Lower leg skin (tissue), 4 donors: ENCODE measurements at regions of chr5 and their contacts with region 1.

Region 1: DNA sequence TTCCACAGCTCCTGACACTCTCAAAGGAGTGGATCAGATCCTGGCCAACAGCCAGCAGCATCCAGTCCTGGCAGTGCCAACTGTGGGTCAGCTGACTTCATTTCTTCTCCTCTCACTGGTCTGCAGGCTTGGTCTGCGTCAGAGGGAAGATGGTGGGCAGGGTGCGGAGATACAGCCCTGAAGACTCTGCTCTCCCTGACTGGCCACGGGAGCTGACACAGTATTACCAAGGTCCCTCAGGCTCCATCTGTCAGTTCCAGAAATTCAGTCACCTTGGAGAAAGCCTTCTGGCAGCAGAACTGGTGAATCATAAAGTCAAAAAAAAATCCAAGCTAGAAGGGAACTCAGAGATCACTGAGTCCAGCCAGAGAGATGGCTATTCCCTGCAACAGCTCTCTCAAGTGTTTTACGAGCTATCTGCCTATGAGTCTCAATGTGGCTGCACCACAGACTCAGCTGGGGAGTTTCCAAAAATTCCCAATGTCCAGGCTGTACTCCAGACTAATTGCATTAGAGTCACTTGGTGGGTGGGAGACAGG is 28.0 kb downstream of the C1QTNF2 start:
- DNase-seq: no peak
- H3K4me3 ChIP-seq: no peak overlapping the region
- CTCF ChIP-seq: no peak
- POLR2A ChIP-seq: no peak

Region 2: DNA sequence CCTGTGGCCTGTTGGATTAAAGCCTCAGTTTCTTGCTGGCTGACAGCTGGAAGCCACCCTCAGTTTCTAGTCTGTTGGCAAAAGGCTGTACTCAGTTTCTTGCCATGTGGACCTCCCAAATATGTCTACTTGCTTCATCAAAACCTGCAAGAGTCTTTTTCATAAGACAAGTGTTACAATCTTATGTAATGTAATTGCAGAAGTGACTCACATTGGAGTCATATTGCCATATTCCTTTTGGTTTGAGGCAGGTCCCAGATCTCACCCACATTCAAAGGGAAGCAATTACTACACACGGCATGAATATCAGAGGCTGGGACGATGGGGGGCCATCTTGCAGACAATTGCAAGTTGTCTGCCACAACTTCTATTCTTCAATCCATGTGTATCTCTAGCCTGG is 725.5 kb before region 1 on chr5:
- intact Hi-C with region 1: no loop called
- DNase-seq: no peak
- H3K4me3 ChIP-seq: no peak overlapping the region
- CTCF ChIP-seq: no peak
- POLR2A ChIP-seq: no peak

Region 3: GRCh38 chr5:160021831-160022446 is 320.5 kb before region 1 on chr5:
- intact Hi-C with region 1: loop called (anchors 2 kb)
- DNase-seq: peak in 1 of 2 donors; percentile 71
- H3K4me3 ChIP-seq: no peak overlapping the region
- CTCF ChIP-seq: peak in 1 of 3 donors; percentile 67
- POLR2A ChIP-seq: no peak

Region 4: DNA sequence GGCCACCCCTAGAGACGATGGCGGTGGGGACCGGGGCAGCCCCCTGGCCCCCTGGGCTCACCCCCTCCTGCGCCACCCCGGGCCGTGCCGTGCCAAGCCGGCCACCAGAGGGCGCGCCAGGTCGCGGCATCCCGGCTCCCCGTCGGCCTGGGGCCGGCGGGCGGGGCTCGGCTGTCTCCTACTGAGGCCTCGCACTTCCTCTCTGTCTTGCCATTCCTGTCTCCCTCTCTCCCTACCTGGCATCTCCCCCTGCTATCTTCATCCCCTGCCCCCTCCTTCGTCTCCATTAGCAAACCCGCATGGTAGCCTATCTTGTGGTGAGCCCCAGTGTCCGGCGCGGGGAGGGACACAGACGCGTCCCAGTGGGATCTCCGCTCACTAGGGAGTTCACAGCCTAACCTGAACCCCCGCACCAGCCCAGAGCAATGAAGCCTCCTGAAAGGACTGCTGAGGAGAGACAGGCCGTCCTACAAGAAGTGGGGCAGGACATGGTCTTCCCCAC is 143.0 kb before region 1 on chr5:
- intact Hi-C with region 1: loop called (anchors 2 kb)
- DNase-seq: peak; percentile 45 to 93
- H3K4me3 ChIP-seq: no peak overlapping the region
- CTCF ChIP-seq: peak in 1 of 3 donors; percentile 64
- POLR2A ChIP-seq: no peak